ENCODE measurements at regions of chr4 and their contacts with region 1.

Region 1: GRCh38 chr4:184263910-184264732 is 46.4 kb upstream of the ENPP6 start:
- DNase-seq: peak; percentile 65 to 80
- H3K4me3 ChIP-seq: no peak overlapping the region
- H3K27ac ChIP-seq: no peak overlapping the region
- H3K4me1 ChIP-seq: peaks cover 31% of the 10 kb centered on the region
- H3K27me3 ChIP-seq: no peaks in the 10 kb centered on the region
- CTCF ChIP-seq: peak; percentile 83

Region 2: DNA sequence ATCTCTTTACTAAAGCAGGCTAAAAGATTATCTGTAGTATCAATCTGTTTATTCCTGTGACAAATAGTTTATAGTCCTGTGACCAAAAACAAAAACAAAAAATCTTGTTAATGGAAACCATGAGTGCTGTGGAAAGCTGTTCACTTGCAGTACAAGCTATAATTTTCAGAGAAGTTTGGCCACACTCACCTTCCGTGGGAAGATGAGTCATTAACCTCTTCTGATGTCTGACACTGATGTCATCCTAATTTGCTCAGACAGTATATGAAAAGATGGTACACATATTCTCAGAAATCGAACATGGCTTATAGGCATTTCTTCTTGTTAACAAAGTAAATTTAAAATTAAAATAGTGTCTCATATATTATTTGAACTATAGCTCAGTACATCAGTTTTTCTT is 26.5 kb before region 1 on chr4:
- CTCF ChIA-PET with region 1: no interaction called
- POLR2A ChIA-PET with region 1: no interaction called
- intact Hi-C with region 1: no loop called
- DNase-seq: no peak
- H3K4me3 ChIP-seq: no peak overlapping the region
- H3K27ac ChIP-seq: no peak overlapping the region
- H3K4me1 ChIP-seq: no peaks in the 10 kb centered on the region
- H3K27me3 ChIP-seq: no peaks in the 10 kb centered on the region; the same call in 1 of the 2 replicates
- CTCF ChIP-seq: no peak

Region 3: GRCh38 chr4:184250795-184251669 is 13.1 kb before region 1 on chr4:
- CTCF ChIA-PET with region 1: no interaction called
- POLR2A ChIA-PET with region 1: no interaction called
- intact Hi-C with region 1: no loop called
- DNase-seq: peak in 1 of 2 experiments; percentile 40
- H3K4me3 ChIP-seq: no peak overlapping the region
- H3K27ac ChIP-seq: no peak overlapping the region
- H3K4me1 ChIP-seq: no peaks in the 10 kb centered on the region
- H3K27me3 ChIP-seq: no peaks in the 10 kb centered on the region
- CTCF ChIP-seq: peak; percentile 72

Region 4: DNA sequence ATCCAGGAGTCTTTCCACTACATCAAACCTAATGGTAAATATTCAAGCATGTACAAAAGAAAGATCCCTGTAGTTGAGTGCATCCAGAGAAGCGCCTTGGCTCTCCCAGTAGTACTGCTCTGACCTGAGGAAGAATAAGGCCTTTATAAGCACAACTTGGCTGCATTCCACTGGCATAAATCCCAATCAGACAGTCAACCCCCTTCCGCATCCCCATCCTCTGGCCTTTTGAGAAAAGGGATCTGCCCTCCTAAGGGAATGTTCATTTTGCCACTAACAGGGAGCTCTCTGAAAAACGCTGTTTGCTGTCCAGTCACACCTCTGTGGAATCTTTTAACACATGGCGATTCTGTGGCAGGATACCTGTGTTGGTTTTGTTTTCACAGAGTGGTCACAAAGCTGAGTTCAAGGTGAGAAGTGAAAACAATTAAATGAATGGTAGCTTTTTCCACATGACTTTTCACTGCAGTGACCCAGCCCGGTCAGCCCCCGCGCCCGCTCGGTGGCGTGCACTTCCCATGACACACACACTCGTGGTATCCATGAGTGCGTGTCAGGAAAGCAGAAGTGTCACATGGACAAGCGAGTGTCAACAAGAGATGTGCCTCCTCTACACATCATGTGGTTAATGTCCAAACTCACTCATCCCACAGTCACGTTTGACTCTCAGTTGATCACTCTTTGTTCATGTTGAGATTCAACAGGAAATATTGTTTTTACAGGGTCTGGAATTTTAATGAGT is 65.7 kb after region 1 on chr4:
- CTCF ChIA-PET with region 1: no interaction called
- POLR2A ChIA-PET with region 1: interaction called, 10 read pairs
- intact Hi-C with region 1: no loop called
- DNase-seq: no peak
- H3K4me3 ChIP-seq: no peak overlapping the region
- H3K27ac ChIP-seq: peak overlapping the region; percentile 66; the same call in 1 of the 2 replicates
- H3K4me1 ChIP-seq: peaks cover 41% of the 10 kb centered on the region
- H3K27me3 ChIP-seq: no peaks in the 10 kb centered on the region
- CTCF ChIP-seq: no peak

Region 5: GRCh38 chr4:184417802-184418511 is 153.8 kb after region 1 on chr4:
- CTCF ChIA-PET with region 1: no interaction called
- POLR2A ChIA-PET with region 1: no interaction called
- intact Hi-C with region 1: loop called (anchors 2 kb)
- DNase-seq: peak in 1 of 2 experiments; percentile 63
- H3K4me3 ChIP-seq: no peak overlapping the region
- H3K27ac ChIP-seq: peak overlapping the region; percentile 41; the same call in 1 of the 2 replicates
- H3K4me1 ChIP-seq: peaks cover 16% of the 10 kb centered on the region
- H3K27me3 ChIP-seq: no peaks in the 10 kb centered on the region
- CTCF ChIP-seq: no peak

Region 6: GRCh38 chr4:184599492-184600135 is 335.5 kb after region 1 on chr4:
- CTCF ChIA-PET with region 1: interaction called, 3 read pairs
- POLR2A ChIA-PET with region 1: no interaction called
- intact Hi-C with region 1: loop called (anchors 5 kb)
- DNase-seq: peak in 1 of 2 experiments; percentile 15
- H3K4me3 ChIP-seq: no peak overlapping the region
- H3K27ac ChIP-seq: no peak overlapping the region
- H3K4me1 ChIP-seq: peaks cover 4% of the 10 kb centered on the region; the same call in 1 of the 2 replicates
- H3K27me3 ChIP-seq: no peaks in the 10 kb centered on the region
- CTCF ChIP-seq: no peak

Region 7: DNA sequence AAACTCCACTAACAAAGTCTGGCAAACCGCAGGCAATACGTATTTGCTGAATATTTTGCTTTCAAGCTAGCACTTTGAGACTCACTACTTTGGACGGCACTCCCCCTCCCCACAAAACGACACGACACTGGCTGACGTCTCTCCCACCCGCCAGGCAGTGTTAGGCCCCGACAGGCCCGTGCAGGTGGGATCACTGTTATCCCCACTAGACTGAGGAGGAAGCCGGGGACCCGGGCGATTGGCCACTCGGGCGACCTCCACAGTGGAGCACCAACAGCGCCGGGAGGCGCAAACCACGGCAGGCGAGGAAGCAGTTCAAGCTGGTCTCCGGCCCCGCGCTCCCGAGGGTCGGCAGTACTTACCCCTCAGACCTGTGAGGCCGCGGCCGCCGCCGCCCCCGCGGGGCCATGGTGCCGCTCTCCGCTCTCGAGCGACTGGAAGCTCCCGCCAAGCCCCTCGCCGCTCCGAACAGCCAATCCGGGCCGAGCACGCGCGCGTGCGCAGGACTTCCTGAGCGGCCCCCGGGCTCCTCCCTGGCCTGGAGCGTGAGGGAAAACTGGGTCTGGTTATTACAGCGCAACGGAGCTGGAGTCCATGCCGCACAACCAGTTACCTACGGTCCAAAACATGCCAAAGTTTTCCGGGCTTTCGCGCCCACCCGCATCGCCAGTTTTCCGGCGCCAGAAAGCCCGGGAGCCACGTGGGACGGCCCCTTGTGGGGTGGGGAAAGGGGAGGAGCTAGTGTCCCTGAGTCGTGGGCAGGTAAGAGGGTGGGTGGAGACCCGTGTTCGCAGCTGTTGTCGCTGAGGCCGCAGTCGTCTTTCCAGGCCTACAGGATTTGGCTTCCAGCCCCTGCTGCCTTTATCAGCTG is 469.8 kb after region 1 on chr4 and contains the start of gene CENPU:
- CTCF ChIA-PET with region 1: interaction called, 4 read pairs
- POLR2A ChIA-PET with region 1: interaction called, 6 read pairs
- intact Hi-C with region 1: loop called (anchors 2 kb)
- DNase-seq: peak; percentile 90 to 98
- H3K4me3 ChIP-seq: peak within 1 kb of the TSS; percentile 95
- H3K27ac ChIP-seq: peak within 1 kb of the TSS; percentile 73
- H3K4me1 ChIP-seq: peaks cover 19% of the 10 kb centered on the region
- H3K27me3 ChIP-seq: no peaks in the 10 kb centered on the region
- CTCF ChIP-seq: no peak
- total RNA-seq, gene CENPU: 25.5 and 47.7 TPM in 2 replicates

Region 8: DNA sequence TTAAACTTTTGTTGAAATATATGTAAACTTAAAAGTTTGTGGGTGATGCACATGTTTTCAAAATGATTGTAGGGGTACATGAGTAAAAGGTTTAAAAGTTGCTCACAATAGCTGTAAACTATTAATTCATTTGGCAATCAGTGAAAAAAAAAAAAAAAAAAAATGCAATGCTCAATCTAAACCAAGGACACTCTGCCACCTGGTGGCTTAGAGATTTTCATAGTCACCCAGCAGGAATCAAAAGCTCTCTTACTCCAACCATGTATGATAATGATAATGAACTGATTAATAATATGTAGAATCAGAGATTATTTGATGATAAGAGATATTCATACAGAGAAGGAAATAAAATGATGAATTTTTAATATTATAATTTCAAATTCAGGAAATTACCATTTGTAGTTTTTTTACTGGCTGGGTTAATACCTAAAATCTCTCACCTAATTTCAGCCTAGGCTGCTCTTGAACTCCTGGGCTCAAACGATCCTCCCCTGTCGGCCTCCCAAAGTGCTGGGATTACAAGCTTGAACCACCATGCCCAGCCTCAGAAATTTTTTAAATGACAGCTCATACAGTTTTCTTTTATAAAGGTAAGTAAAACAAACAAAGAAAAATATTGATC is 832.0 kb after region 1 on chr4:
- CTCF ChIA-PET with region 1: interaction called, 5 read pairs
- POLR2A ChIA-PET with region 1: no interaction called
- intact Hi-C with region 1: loop called (anchors 5 kb)
- DNase-seq: peak in 1 of 2 experiments; percentile 20
- H3K4me3 ChIP-seq: no peak overlapping the region
- H3K27ac ChIP-seq: no peak overlapping the region
- H3K4me1 ChIP-seq: no peaks in the 10 kb centered on the region
- H3K27me3 ChIP-seq: no peaks in the 10 kb centered on the region
- CTCF ChIP-seq: peak; percentile 71

Measured in PC-9 (cell line).